ENCODE measurements at regions of chr2 and their contacts with region 1.

Region 1: DNA sequence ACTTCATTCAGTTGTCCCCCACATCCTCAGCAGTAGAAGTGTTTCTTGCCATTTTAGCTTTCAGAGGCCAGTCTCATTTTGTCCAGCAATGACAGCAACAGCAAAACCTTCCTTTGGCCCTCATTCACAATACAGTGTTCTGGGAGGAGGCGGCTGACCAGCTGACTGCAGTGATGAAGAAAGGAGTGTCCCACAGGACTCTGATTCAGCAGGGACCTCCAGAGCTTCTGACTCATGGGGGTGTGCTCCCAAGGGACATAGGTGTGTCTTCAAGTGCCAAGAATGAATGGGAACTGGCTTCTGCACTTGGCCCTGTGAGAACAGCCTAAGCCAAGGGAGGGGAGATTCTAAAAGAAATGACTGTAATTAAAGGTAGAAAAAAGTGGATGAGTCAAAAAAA is 147.0 kb upstream of the PELI1 start:
- DNase-seq: no peak
- ATAC-seq: no peak
- H3K4me3 ChIP-seq: no peak overlapping the region
- H3K27ac ChIP-seq: no peak overlapping the region
- H3K4me1 ChIP-seq: peaks cover 12% of the 10 kb centered on the region
- H3K27me3 ChIP-seq: no peaks in the 10 kb centered on the region
- CTCF ChIP-seq: no peak
- EP300 ChIP-seq: no peak
- POLR2A ChIP-seq: no peak
- RAD21 ChIP-seq: no peak

Region 2: GRCh38 chr2:63926800-63927199 is 364.4 kb before region 1 on chr2:
- CTCF ChIA-PET with region 1: no interaction called
- POLR2A ChIA-PET with region 1: no interaction called
- RAD21 ChIA-PET with region 1: no interaction called
- SMC1A ChIA-PET with region 1: no interaction called
- in situ Hi-C with region 1: no loop called
- intact Hi-C with region 1: no loop called
- DNase-seq: no peak
- ATAC-seq: no peak
- H3K4me3 ChIP-seq: no peak overlapping the region
- H3K27ac ChIP-seq: no peak overlapping the region
- H3K4me1 ChIP-seq: no peaks in the 10 kb centered on the region
- H3K27me3 ChIP-seq: no peaks in the 10 kb centered on the region
- CTCF ChIP-seq: no peak
- EP300 ChIP-seq: no peak
- POLR2A ChIP-seq: no peak
- RAD21 ChIP-seq: no peak

Region 3: GRCh38 chr2:64222351-64222750 is 68.8 kb before region 1 on chr2:
- CTCF ChIA-PET with region 1: interaction called, 3 read pairs
- POLR2A ChIA-PET with region 1: interaction called, 4 read pairs
- RAD21 ChIA-PET with region 1: interaction called, 69 read pairs
- SMC1A ChIA-PET with region 1: interaction called, 14 read pairs
- in situ Hi-C with region 1: no loop called
- intact Hi-C with region 1: no loop called
- DNase-seq: no peak
- ATAC-seq: no peak
- H3K4me3 ChIP-seq: no peak overlapping the region
- H3K27ac ChIP-seq: no peak overlapping the region; the same call in 1 of the 2 replicates
- H3K4me1 ChIP-seq: peaks cover 14% of the 10 kb centered on the region
- H3K27me3 ChIP-seq: no peaks in the 10 kb centered on the region
- CTCF ChIP-seq: no peak
- EP300 ChIP-seq: no peak
- POLR2A ChIP-seq: no peak
- RAD21 ChIP-seq: no peak

Region 4: DNA sequence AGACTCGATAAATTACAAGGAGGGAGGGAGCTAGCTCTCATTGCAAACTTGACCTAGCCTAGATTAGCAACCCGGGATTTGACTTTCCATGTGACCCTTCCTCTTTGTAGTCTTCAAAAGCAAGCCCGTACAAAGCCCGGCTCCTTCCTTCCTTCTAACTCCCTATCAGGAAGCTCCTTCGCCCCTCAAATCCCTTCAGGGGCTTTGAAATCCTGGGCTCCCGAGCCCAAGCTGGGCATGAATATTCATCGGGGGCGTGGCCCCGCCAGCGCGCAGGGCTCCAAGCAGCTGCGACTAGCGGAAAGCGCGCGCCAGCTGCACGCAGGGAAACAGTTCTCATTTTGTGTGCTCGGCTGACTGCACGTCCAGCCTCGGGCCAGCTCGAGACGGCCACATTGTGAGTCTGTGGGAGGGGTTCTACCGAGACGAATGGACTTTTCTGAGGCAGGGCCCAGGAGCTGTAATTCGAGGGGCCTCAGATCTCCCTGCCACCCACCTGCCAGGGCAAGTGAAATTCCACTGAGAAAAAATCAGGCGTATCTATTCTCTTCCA is 63.0 kb before region 1 on chr2:
- CTCF ChIA-PET with region 1: interaction called, 3 read pairs
- POLR2A ChIA-PET with region 1: interaction called, 4 read pairs
- RAD21 ChIA-PET with region 1: interaction called, 12 read pairs
- SMC1A ChIA-PET with region 1: interaction called, 14 read pairs
- in situ Hi-C with region 1: no loop called
- intact Hi-C with region 1: no loop called
- DNase-seq: peak; percentile 39
- ATAC-seq: peak; percentile 99
- H3K4me3 ChIP-seq: peak overlapping the region; percentile 56
- H3K27ac ChIP-seq: peak overlapping the region; percentile 34
- H3K4me1 ChIP-seq: peaks cover 5% of the 10 kb centered on the region
- H3K27me3 ChIP-seq: no peaks in the 10 kb centered on the region
- CTCF ChIP-seq: no peak
- EP300 ChIP-seq: no peak
- POLR2A ChIP-seq: peak; percentile 84
- RAD21 ChIP-seq: no peak

Region 5: GRCh38 chr2:64249426-64249825 is 41.8 kb before region 1 on chr2:
- CTCF ChIA-PET with region 1: no interaction called
- POLR2A ChIA-PET with region 1: no interaction called
- RAD21 ChIA-PET with region 1: no interaction called
- SMC1A ChIA-PET with region 1: no interaction called
- in situ Hi-C with region 1: no loop called
- intact Hi-C with region 1: no loop called
- DNase-seq: no peak
- ATAC-seq: no peak
- H3K4me3 ChIP-seq: no peak overlapping the region
- H3K27ac ChIP-seq: no peak overlapping the region
- H3K4me1 ChIP-seq: no peaks in the 10 kb centered on the region
- H3K27me3 ChIP-seq: no peaks in the 10 kb centered on the region
- CTCF ChIP-seq: no peak
- EP300 ChIP-seq: no peak
- POLR2A ChIP-seq: no peak
- RAD21 ChIP-seq: no peak

Region 6: DNA sequence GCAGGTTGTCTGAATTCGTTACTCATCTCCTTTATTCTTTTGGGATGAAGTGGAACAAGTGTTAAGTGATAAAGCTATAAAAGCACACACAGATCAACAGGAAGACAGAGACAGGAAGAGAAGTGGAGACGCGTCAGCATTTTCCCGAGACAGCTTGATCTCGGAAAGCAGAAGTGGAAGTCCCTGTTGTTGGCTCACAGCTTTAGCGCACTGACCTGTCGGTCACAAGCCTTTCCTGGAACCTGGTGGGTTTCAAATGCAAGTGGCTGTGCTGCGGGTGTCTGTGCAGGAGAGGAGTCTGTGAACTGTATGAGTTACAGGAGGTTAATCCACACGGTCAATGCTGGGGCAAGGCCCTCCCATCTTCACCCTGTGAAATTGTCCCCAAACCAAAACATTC is 30.4 kb before region 1 on chr2:
- CTCF ChIA-PET with region 1: interaction called, 3 read pairs
- POLR2A ChIA-PET with region 1: interaction called, 6 read pairs
- RAD21 ChIA-PET with region 1: interaction called, 7 read pairs
- SMC1A ChIA-PET with region 1: interaction called, 13 read pairs
- in situ Hi-C with region 1: no loop called
- intact Hi-C with region 1: no loop called
- DNase-seq: peak; percentile 75
- ATAC-seq: peak; percentile 99
- H3K4me3 ChIP-seq: peak overlapping the region; percentile 31; the same call in 1 of the 2 replicates
- H3K27ac ChIP-seq: peak overlapping the region; percentile 75
- H3K4me1 ChIP-seq: peaks cover 10% of the 10 kb centered on the region
- H3K27me3 ChIP-seq: no peaks in the 10 kb centered on the region
- CTCF ChIP-seq: no peak
- EP300 ChIP-seq: peak; percentile 35 to 77; a peak in 3 of 4 replicates
- POLR2A ChIP-seq: no peak
- RAD21 ChIP-seq: no peak

Region 7: DNA sequence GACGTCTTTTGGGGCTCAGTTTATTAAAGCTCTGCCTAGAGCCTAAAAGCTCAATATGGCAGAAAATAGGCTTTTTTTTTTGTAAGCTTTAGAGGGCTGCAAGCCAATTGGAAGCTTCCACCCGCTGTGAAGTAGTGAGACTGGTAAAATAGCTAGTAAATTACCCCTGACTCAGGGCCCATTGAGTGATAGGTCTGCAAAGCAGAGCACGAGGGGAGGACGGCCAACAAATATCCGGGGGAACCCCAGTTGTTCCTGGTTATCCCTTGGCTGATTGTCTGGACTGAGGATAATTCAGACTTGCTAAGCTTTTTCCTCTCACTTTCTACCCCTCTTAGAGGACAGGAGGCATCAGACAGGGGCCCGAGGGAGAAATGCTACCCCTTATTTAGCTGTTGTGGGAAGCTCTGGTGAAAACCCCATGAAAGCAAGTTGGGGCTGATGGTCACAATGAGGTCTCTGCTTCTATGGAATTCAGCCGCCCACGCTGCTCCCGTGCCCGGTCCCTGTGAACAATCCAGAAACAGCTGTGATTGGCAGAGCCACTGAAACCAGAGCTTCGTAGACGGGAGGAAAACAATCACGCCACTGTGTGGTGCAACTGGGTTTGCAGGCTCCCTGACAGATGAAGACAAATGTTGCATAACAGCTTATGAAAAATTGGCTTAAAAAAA is 20.9 kb after region 1 on chr2:
- CTCF ChIA-PET with region 1: interaction called, 77 read pairs
- POLR2A ChIA-PET with region 1: interaction called, 6 read pairs
- RAD21 ChIA-PET with region 1: interaction called, 52 read pairs
- SMC1A ChIA-PET with region 1: interaction called, 31 read pairs
- in situ Hi-C with region 1: no loop called
- intact Hi-C with region 1: no loop called
- DNase-seq: no peak
- ATAC-seq: peak; percentile 80
- H3K4me3 ChIP-seq: no peak overlapping the region
- H3K27ac ChIP-seq: no peak overlapping the region
- H3K4me1 ChIP-seq: no peaks in the 10 kb centered on the region
- H3K27me3 ChIP-seq: no peaks in the 10 kb centered on the region
- CTCF ChIP-seq: peak in 2 of 3 experiments; percentile 38 to 55; a peak in 3 of 6 replicates
- EP300 ChIP-seq: no peak
- POLR2A ChIP-seq: no peak
- RAD21 ChIP-seq: no peak

Region 8: DNA sequence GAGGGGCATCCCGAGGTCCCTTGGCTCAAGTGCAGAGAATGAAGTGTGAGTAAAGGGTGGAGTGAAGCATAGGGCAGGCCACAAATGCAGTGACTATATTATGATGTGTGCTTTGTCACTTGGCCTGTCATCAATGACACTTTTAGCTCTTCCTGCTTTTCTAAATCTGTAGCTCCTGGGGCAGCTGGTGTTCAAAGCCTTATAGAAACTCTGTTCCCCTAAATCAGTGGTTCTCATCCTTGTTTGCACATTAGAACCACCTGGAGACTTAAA is 27.2 kb after region 1 on chr2:
- CTCF ChIA-PET with region 1: interaction called, 77 read pairs
- POLR2A ChIA-PET with region 1: interaction called, 4 read pairs
- RAD21 ChIA-PET with region 1: interaction called, 157 read pairs
- SMC1A ChIA-PET with region 1: interaction called, 168 read pairs
- in situ Hi-C with region 1: no loop called
- intact Hi-C with region 1: no loop called
- DNase-seq: no peak
- ATAC-seq: peak; percentile 83
- H3K4me3 ChIP-seq: no peak overlapping the region
- H3K27ac ChIP-seq: no peak overlapping the region
- H3K4me1 ChIP-seq: peaks cover 13% of the 10 kb centered on the region
- H3K27me3 ChIP-seq: no peaks in the 10 kb centered on the region
- CTCF ChIP-seq: no peak
- EP300 ChIP-seq: 0 out of 4 replicates have a peak, but pooled peaks of 1 of the 2 experiments have one; percentile 13
- POLR2A ChIP-seq: no peak
- RAD21 ChIP-seq: no peak

Region 9: DNA sequence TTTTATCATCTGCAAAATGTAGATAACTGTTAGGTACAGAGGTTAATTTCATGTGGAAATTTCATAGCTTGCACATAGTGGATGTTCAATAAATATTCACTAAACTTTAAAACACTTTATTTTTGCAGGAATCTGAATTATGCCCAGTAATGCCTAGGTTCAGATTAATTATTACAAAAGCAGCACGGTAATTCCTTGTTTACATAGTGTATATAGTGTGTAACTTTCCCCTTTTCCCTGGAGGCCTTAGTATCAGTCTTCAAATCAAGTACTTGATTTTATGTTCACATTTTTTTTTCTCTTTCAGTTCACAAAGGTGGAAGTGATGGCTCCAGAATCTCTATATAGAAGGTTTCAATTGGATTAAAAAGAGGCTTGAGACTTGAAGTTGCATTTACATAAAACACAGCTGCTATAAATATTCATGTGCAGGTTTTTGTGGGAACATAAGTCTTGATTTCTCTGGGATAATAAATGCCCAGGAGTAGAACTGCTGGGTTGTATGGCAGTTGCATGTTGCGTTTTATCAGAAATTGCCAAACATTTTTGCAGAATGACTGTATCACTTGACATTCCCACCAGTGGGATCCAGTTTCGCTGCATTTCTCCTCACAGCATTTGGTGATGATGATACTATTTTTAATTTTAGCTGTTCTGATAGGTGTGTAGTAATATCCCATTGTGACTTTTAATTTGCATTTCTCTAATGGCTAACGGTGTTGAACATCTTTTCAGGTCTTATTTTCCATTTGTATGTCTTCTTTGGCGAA is 135.2 kb after region 1 on chr2:
- CTCF ChIA-PET with region 1: no interaction called
- POLR2A ChIA-PET with region 1: no interaction called
- RAD21 ChIA-PET with region 1: no interaction called
- SMC1A ChIA-PET with region 1: no interaction called
- in situ Hi-C with region 1: no loop called
- intact Hi-C with region 1: no loop called
- DNase-seq: no peak
- ATAC-seq: no peak
- H3K4me3 ChIP-seq: no peak overlapping the region
- H3K27ac ChIP-seq: no peak overlapping the region
- H3K4me1 ChIP-seq: no peaks in the 10 kb centered on the region
- H3K27me3 ChIP-seq: no peaks in the 10 kb centered on the region
- CTCF ChIP-seq: no peak
- EP300 ChIP-seq: no peak
- POLR2A ChIP-seq: no peak
- RAD21 ChIP-seq: no peak

Measured in GM12878 (cell line).